ENCODE measurements at regions of chr19 and their contacts with region 1.

Region 1: DNA sequence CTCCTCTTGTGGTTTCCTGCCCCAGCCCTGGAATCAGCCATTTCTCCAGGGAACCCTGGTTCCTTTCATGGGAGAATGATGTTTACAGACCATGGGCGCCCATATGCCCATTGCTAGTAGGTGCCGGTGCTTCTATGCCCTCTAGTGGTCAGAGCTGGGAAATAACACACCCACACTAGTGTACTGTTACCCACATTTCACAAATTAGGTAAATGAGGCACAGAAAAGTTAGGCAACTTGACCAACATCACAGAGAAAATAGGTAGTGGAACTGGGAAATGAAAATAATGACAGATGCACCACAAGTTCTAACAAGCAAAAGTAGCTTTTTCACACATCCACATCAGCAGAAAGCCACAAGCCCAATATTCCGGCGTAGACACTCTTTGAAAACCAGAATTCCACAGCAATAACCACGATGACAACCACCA is 1.3 kb upstream of the CEACAM3 start:
- DNase-seq: peak; percentile 70
- ATAC-seq: no peak
- H3K4me3 ChIP-seq: no peak overlapping the region
- H3K27ac ChIP-seq: peak overlapping the region; percentile 100
- H3K4me1 ChIP-seq: peaks cover 60% of the 10 kb centered on the region
- H3K27me3 ChIP-seq: no peaks in the 10 kb centered on the region
- CTCF ChIP-seq: peak; percentile 74

Region 2: DNA sequence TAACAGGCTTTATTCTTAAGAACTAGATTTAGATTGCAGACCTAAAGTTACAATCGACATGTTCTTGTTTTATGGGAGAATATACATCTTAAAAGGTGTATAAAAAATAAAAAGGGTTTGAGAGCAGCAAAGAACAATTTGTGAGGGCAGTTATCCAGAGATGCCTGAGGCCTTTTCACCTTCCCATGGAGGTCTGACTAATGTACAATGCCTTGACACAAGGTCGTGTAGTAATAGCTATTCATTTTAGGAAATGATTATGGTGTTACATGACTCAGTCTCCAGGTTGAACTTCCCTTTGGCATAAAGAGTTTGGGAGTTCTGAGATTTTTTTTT is 19.7 kb before region 1 on chr19:
- CTCF ChIA-PET with region 1: interaction called, 15 read pairs
- POLR2A ChIA-PET with region 1: interaction called, 3 read pairs
- intact Hi-C with region 1: no loop called
- DNase-seq: peak; percentile 87
- ATAC-seq: peak; percentile 53
- H3K4me3 ChIP-seq: peak overlapping the region; percentile 26; the same call in 1 of the 2 replicates
- H3K27ac ChIP-seq: peak overlapping the region; percentile 99
- H3K4me1 ChIP-seq: peaks cover 70% of the 10 kb centered on the region
- H3K27me3 ChIP-seq: no peaks in the 10 kb centered on the region
- CTCF ChIP-seq: no peak

Region 3: DNA sequence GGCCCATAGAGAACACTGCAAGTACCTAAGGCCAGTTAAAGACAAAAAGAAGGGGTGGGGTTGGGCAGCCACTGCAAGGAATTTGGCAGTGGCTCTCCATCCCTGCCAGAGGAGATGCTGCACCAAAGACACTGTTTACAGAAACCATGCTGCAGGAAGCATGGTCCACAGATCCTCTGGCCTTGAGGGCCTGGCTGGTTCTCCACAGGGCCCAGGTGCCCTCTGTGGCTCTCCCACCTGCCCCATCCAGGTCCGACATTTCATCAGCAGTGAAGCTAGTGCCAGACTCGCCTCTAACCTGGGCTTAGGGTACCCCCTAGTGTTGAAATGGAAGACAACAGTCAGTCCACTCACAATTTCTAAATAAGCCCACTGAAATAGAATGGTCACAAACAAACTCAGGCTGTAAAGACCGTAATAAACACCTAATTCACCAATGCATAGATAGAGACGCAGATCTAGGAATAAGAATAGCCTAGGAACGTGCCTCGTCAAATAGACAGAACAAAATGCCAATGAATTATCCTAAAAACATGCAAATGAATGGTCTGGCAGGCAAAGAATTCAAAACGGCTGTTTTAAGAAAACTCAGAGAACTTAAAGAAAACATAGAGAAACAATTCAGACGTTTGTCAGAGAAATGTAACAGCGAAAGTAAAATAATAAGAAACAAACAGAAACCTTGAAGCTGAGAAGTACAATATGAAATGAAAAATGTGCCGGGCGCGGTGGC is 26.1 kb after region 1 on chr19:
- CTCF ChIA-PET with region 1: interaction called, 19 read pairs
- POLR2A ChIA-PET with region 1: no interaction called
- intact Hi-C with region 1: loop called (anchors 2 kb)
- DNase-seq: peak; percentile 72
- ATAC-seq: peak; percentile 87
- H3K4me3 ChIP-seq: peak overlapping the region; percentile 33; the same call in 1 of the 2 replicates
- H3K27ac ChIP-seq: no peak overlapping the region
- H3K4me1 ChIP-seq: no peaks in the 10 kb centered on the region
- H3K27me3 ChIP-seq: no peaks in the 10 kb centered on the region
- CTCF ChIP-seq: peak; percentile 83

Measured in PC-3 (cell line).